ENCODE measurements at regions of chr12 and their contacts with region 1.

Region 1: GRCh38 chr12:53543539-53543938 is 36.3 kb upstream of the NPFF start:
- DNase-seq: peak; percentile 69
- ATAC-seq: peak; percentile 89
- H3K4me3 ChIP-seq: no peak overlapping the region
- H3K27ac ChIP-seq: no peak overlapping the region
- H3K4me1 ChIP-seq: peaks cover 7% of the 10 kb centered on the region
- H3K27me3 ChIP-seq: no peaks in the 10 kb centered on the region
- CTCF ChIP-seq: peak; percentile 94

Region 2: DNA sequence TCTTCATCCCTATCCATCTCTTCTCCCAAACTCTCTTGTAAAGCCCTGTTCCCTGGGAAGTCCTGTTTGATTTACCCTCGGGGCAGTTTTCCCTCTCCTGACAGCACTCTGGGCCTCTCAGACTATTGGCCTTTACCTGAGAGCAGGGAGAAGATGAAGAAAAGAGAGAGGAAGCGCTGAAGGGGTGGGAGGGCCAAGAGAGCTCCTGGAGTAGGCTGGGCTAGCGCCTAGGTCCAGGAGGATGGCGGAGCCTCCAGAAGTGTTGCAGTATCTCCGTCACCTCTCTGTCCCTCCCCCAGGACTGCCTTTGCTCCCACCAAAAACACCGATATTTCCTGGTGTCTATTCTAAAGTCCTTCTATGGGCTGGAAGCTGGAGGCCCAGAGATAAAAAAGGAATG is 451.8 kb before region 1 on chr12:
- CTCF ChIA-PET with region 1: interaction called, 12 read pairs
- POLR2A ChIA-PET with region 1: no interaction called
- intact Hi-C with region 1: no loop called
- DNase-seq: no peak
- ATAC-seq: no peak
- H3K4me3 ChIP-seq: no peak overlapping the region
- H3K27ac ChIP-seq: no peak overlapping the region
- H3K4me1 ChIP-seq: peaks cover 13% of the 10 kb centered on the region
- H3K27me3 ChIP-seq: no peaks in the 10 kb centered on the region
- CTCF ChIP-seq: no peak

Region 3: DNA sequence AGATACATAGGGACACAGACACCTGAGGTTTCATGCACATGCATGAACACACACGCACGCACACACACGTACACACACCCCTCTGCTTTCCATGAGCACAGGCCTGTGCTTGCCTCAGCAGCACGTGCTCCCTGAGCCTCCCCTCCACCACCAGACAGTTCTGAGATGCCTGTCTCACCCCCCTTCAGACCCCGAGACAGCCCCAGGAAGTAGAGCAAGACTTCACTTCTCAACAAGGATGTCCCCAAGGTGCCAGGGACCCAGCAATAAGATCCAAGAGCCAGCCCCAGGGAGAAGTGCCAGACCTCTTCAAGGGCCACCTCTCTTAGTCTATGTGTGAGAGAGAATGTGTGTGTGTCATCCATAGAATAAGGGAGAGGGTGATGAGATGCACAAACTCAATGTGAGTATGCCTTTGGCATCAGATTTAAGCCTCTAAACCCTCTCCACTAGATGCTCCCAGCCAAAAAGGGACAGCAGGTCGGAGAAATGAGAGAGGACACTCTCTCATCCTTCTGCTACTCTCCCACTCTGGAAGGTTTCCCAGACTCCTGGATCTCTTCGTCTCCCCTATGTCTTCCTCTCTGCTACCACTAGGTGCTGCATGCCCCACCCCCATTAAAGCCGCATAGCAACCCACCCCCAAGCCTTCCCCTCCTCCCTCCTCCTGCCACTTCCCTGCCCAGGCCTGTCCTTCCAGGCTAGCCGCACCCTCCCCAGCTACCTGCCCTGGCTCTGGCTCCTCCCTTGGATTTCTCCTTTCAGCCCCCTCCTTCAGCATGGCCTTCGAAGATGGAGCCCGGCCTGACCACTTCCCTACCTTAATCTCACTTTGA is 319.3 kb before region 1 on chr12:
- CTCF ChIA-PET with region 1: no interaction called
- POLR2A ChIA-PET with region 1: no interaction called
- intact Hi-C with region 1: no loop called
- DNase-seq: peak; percentile 61
- ATAC-seq: no peak
- H3K4me3 ChIP-seq: no peak overlapping the region
- H3K27ac ChIP-seq: peak overlapping the region; percentile 21
- H3K4me1 ChIP-seq: peaks cover 34% of the 10 kb centered on the region
- H3K27me3 ChIP-seq: no peaks in the 10 kb centered on the region
- CTCF ChIP-seq: peak; percentile 39; the same call in 1 of the 2 replicates

Region 4: GRCh38 chr12:53591301-53592206 is 48.0 kb after region 1 on chr12:
- CTCF ChIA-PET with region 1: no interaction called
- POLR2A ChIA-PET with region 1: no interaction called
- intact Hi-C with region 1: loop called (anchors 5 kb)
- DNase-seq: no peak
- ATAC-seq: peak; percentile 66
- H3K4me3 ChIP-seq: no peak overlapping the region
- H3K27ac ChIP-seq: no peak overlapping the region
- H3K4me1 ChIP-seq: no peaks in the 10 kb centered on the region
- H3K27me3 ChIP-seq: no peaks in the 10 kb centered on the region
- CTCF ChIP-seq: no peak

Measured in PC-3 (cell line).